GM12878 (cell line): ENCODE measurements at regions of chr11 and their contacts with region 1.

Region 1: GRCh38 chr11:83663446-83663845 is 377.3 kb upstream of the CCDC90B start:
- DNase-seq: no peak
- ATAC-seq: no peak
- H3K4me3 ChIP-seq: no peak overlapping the region
- H3K27ac ChIP-seq: no peak overlapping the region
- H3K4me1 ChIP-seq: no peaks in the 10 kb centered on the region; the same call in 1 of the 2 replicates
- H3K27me3 ChIP-seq: no peaks in the 10 kb centered on the region; a peak in 1 of 4 replicates
- CTCF ChIP-seq: no peak
- EP300 ChIP-seq: no peak
- POLR2A ChIP-seq: no peak
- RAD21 ChIP-seq: no peak

Region 2: GRCh38 chr11:83521647-83522596 is 141.5 kb before region 1 on chr11:
- CTCF ChIA-PET with region 1: no interaction called
- POLR2A ChIA-PET with region 1: no interaction called
- RAD21 ChIA-PET with region 1: no interaction called
- SMC1A ChIA-PET with region 1: no interaction called
- in situ Hi-C with region 1: no loop called
- intact Hi-C with region 1: no loop called
- DNase-seq: no peak
- ATAC-seq: no peak
- H3K4me3 ChIP-seq: no peak overlapping the region
- H3K27ac ChIP-seq: no peak overlapping the region
- H3K4me1 ChIP-seq: no peaks in the 10 kb centered on the region
- H3K27me3 ChIP-seq: no peaks in the 10 kb centered on the region
- CTCF ChIP-seq: peak; percentile 15 to 41 (median 19); a peak in 4 of 6 replicates
- EP300 ChIP-seq: no peak
- POLR2A ChIP-seq: no peak
- RAD21 ChIP-seq: peak; percentile 57

Region 3: GRCh38 chr11:83648610-83649527 is 14.6 kb before region 1 on chr11:
- CTCF ChIA-PET with region 1: no interaction called
- POLR2A ChIA-PET with region 1: no interaction called
- RAD21 ChIA-PET with region 1: no interaction called
- SMC1A ChIA-PET with region 1: no interaction called
- in situ Hi-C with region 1: no loop called
- intact Hi-C with region 1: loop called (anchors 1 kb)
- DNase-seq: no peak
- ATAC-seq: no peak
- H3K4me3 ChIP-seq: no peak overlapping the region
- H3K27ac ChIP-seq: no peak overlapping the region
- H3K4me1 ChIP-seq: no peaks in the 10 kb centered on the region
- H3K27me3 ChIP-seq: no peaks in the 10 kb centered on the region; a peak in 3 of 4 replicates
- CTCF ChIP-seq: no peak
- EP300 ChIP-seq: no peak
- POLR2A ChIP-seq: no peak
- RAD21 ChIP-seq: no peak

Region 4: DNA sequence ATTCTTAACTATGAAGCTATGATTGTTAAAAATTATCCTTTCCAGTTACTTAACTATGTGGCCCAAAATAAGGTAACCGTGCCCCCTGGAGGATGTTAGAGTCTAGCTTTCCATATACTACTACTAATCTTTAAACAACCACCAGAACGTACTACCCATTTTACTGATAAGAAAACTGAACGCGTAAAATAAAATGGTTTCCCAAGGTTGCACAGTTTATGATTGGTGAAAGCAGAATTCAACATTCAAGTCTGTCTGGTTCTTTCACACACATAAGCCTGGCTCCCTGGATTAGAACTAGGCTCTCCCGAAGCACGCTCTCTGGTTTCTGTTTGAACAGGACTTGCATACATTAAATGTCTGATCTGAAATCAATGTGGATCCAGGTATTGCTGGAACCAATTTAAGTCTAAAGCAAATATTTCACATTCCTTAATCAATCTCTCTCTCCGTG is 60.6 kb after region 1 on chr11:
- CTCF ChIA-PET with region 1: no interaction called
- POLR2A ChIA-PET with region 1: no interaction called
- RAD21 ChIA-PET with region 1: no interaction called
- SMC1A ChIA-PET with region 1: no interaction called
- in situ Hi-C with region 1: no loop called
- intact Hi-C with region 1: no loop called
- DNase-seq: peak; percentile 23
- ATAC-seq: peak; percentile 78
- H3K4me3 ChIP-seq: no peak overlapping the region
- H3K27ac ChIP-seq: no peak overlapping the region
- H3K4me1 ChIP-seq: peaks cover 11% of the 10 kb centered on the region; the same call in 1 of the 2 replicates
- H3K27me3 ChIP-seq: 0 out of 4 replicates have a peak, but pooled peaks cover 0 to 2% of the 10 kb centered on the region in 2 experiments
- CTCF ChIP-seq: peak; percentile 33 to 56 (median 51); a peak in 5 of 6 replicates
- EP300 ChIP-seq: no peak
- POLR2A ChIP-seq: no peak
- RAD21 ChIP-seq: peak; percentile 76

Region 5: DNA sequence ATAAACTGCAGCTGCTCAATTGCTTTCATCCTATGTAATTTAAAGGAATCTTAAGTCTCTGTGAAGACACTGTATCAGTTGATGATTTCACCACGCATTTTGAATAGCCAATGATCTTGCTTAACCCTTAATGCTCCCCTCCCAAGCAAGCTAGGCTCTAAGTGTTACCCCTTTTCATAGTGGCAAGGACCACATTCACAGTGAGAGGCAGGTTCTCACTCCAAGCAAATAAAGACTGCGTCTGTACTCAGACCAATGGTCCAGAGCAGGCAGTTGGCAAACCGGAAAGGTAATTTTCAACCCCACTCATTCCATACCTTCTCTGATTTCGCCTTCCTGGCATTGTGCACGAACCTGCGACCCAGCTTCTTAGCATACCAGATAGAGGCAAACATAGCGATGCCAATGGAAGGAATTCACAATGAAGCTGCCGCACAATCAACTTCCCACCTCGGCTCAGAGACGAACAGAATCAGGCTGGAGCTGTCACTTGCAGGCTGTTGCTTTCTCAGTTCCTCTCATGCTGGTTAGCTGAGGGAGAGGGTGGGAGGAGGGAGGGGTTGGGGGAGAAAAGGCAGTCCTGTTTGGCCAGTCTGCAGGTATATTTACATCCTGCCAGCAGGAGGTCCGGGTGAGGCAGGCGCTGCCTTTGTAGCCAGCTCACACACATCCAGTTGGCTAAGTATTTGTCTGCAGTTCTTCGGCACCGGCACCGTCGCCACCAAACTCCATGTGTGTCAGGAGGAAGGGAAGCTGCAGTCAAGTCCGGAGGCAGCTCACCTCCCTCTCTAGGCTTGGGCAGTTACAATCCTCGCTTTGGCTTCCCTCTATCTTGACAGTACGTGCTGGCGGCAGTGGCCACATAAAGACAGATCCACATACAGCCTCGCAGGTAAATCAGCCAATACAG is 773.9 kb after region 1 on chr11:
- CTCF ChIA-PET with region 1: no interaction called
- POLR2A ChIA-PET with region 1: no interaction called
- RAD21 ChIA-PET with region 1: no interaction called
- SMC1A ChIA-PET with region 1: no interaction called
- in situ Hi-C with region 1: no loop called
- intact Hi-C with region 1: no loop called
- DNase-seq: peak; percentile 3
- ATAC-seq: peak; percentile 98
- H3K4me3 ChIP-seq: no peak overlapping the region
- H3K27ac ChIP-seq: no peak overlapping the region
- H3K4me1 ChIP-seq: peaks cover 4% of the 10 kb centered on the region
- H3K27me3 ChIP-seq: no peaks in the 10 kb centered on the region; a peak in 1 of 4 replicates
- CTCF ChIP-seq: no peak
- EP300 ChIP-seq: no peak
- POLR2A ChIP-seq: no peak
- RAD21 ChIP-seq: no peak